ENCODE measurements at regions of chr1 and their contacts with region 1.

Region 1: DNA sequence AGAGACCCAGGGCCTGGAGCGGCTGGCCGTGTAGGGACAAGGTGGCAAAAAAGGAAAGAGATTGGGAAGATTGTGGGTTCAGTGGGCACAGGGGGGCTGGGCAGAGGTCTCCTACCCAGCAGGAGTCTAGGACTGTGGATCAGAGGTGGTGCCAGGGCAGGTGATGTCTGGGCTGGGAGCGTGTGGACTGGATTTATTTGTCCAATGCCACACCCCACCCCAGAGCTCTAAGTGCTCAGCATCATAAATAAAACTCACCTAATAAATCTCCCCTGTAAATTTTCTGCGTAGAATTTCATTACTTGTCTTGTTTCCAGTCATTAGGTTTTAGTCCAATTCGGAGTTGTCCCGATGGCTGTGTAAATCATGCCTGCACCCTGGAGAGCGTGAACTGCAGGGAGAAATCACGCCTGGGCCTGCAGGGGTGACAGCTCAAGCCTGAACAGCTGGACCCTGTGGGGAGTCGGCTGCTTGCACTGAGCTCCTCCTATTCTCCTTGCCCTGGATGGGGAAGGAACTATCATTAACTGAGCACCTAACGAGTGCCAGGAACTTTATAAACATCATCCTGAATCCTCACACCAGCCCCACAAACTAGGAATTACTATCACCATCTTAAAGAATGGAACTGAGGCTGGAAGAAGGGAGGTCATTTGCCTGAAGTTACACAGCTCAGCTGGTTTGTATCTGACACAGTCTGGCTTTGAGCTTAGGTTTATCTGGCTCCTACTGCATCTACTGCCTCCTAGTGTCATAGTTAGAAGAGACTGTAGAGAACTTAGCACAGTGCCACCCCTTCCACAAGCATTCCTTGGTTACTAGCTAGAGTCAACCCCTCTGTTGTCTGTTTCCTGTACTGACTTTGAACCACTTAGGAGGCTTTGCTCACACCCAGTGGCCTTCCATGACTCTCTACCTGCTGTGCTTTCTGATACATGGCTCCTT is 25.0 kb upstream of the POU3F1 start:
- DNase-seq: no peak
- ATAC-seq: peak; percentile 83
- H3K4me3 Mint-ChIP-seq: no peak overlapping the region
- H3K27ac Mint-ChIP-seq: no peak overlapping the region
- H3K4me1 Mint-ChIP-seq: peaks cover 55% of the 10 kb centered on the region
- H3K27me3 Mint-ChIP-seq: no peaks in the 10 kb centered on the region
- CTCF ChIP-seq: no peak

Region 2: GRCh38 chr1:37987679-37988078 is 83.9 kb before region 1 on chr1:
- CTCF ChIA-PET with region 1: no interaction called
- POLR2A ChIA-PET with region 1: no interaction called
- DNase-seq: no peak
- ATAC-seq: no peak
- H3K4me3 Mint-ChIP-seq: peak overlapping the region; percentile 87; the same call in 1 of the 2 replicates
- H3K27ac Mint-ChIP-seq: no peak overlapping the region; the same call in 1 of the 2 replicates
- H3K4me1 Mint-ChIP-seq: peaks cover 12% of the 10 kb centered on the region
- H3K27me3 Mint-ChIP-seq: no peaks in the 10 kb centered on the region
- CTCF ChIP-seq: no peak

Region 3: GRCh38 chr1:38037221-38037939 is 34.2 kb before region 1 on chr1:
- CTCF ChIA-PET with region 1: interaction called, 49 read pairs
- POLR2A ChIA-PET with region 1: no interaction called
- DNase-seq: no peak
- ATAC-seq: no peak
- H3K4me3 Mint-ChIP-seq: no peak overlapping the region
- H3K27ac Mint-ChIP-seq: no peak overlapping the region
- H3K4me1 Mint-ChIP-seq: peaks cover 13% of the 10 kb centered on the region
- H3K27me3 Mint-ChIP-seq: peaks cover 6% of the 10 kb centered on the region
- CTCF ChIP-seq: no peak

Region 4: GRCh38 chr1:38052750-38053410 is 18.7 kb before region 1 on chr1:
- CTCF ChIA-PET with region 1: interaction called, 90 read pairs
- POLR2A ChIA-PET with region 1: interaction called, 3 read pairs
- DNase-seq: peak; percentile 75
- ATAC-seq: peak; percentile 94
- H3K4me3 Mint-ChIP-seq: no peak overlapping the region
- H3K27ac Mint-ChIP-seq: no peak overlapping the region
- H3K4me1 Mint-ChIP-seq: peaks cover 46% of the 10 kb centered on the region
- H3K27me3 Mint-ChIP-seq: peaks cover 12% of the 10 kb centered on the region
- CTCF ChIP-seq: no peak

Region 5: GRCh38 chr1:38102636-38103035 is 31.1 kb after region 1 on chr1:
- CTCF ChIA-PET with region 1: interaction called, 18 read pairs
- POLR2A ChIA-PET with region 1: no interaction called
- DNase-seq: no peak
- ATAC-seq: no peak
- H3K4me3 Mint-ChIP-seq: no peak overlapping the region
- H3K27ac Mint-ChIP-seq: no peak overlapping the region
- H3K4me1 Mint-ChIP-seq: peaks cover 14% of the 10 kb centered on the region
- H3K27me3 Mint-ChIP-seq: no peaks in the 10 kb centered on the region
- CTCF ChIP-seq: no peak

Measured in WTC11 (cell line).